Activated CD8-positive, alpha-beta memory T cell treated with anti-CD3 and anti-CD28 coated beads, Interleukin-2, amount 10 ng/mL, durations not matched to agents 7 days and 5 days (primary cell): ENCODE measurements at regions of chr11 and their contacts with region 1.

Region 1: GRCh38 chr11:130894322-130895025 is 21.8 kb downstream of the SNX19 start:
- DNase-seq: peak; percentile 77
- ATAC-seq: peak; percentile 91
- H3K4me3 Mint-ChIP-seq: no peak overlapping the region
- H3K27ac Mint-ChIP-seq: no peak overlapping the region
- H3K4me1 Mint-ChIP-seq: peaks cover 5% of the 10 kb centered on the region
- H3K27me3 Mint-ChIP-seq: no peaks in the 10 kb centered on the region

Region 2: DNA sequence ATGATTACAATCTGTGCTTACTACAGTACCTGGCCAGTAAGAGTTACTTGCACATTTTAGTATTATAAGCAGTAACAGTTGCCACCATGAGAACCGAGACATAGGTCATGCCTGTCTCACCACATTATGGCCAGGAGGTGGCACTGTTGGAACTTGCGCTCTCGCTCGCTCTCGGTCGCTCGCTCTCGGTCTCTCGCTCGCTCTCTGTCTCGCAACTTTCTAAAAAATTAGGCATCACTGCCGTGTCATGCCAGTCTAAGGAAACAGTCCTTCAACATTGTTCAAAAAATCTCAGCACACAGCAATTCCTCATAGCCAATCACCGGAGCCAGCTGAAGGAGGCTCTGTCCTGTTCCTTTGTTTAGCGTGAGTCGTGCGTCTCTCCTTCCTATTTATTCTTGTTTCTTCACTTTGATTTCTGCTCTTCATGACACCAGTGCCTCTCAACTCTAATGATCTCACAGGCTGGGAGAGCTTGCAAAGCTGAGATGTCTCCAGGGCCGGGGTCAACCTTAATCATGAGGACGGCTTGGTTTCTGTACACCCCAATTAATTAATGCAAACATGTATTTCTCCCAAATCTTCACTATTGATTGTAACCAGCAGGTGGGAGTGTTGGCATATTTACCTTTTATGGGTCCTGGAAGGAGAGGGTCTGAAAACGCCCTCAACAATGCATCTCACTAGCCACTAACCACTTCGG is 459.8 kb before region 1 on chr11:
- CTCF ChIA-PET with region 1: interaction called, 10 read pairs
- DNase-seq: peak; percentile 81
- ATAC-seq: peak; percentile 82
- H3K4me3 Mint-ChIP-seq: no peak overlapping the region
- H3K27ac Mint-ChIP-seq: no peak overlapping the region
- H3K4me1 Mint-ChIP-seq: peaks cover 31% of the 10 kb centered on the region
- H3K27me3 Mint-ChIP-seq: peaks cover 34% of the 10 kb centered on the region

Region 3: GRCh38 chr11:130872981-130873380 is 21.5 kb before region 1 on chr11:
- CTCF ChIA-PET with region 1: interaction called, 12 read pairs
- DNase-seq: no peak
- ATAC-seq: no peak
- H3K4me3 Mint-ChIP-seq: no peak overlapping the region
- H3K27ac Mint-ChIP-seq: no peak overlapping the region
- H3K4me1 Mint-ChIP-seq: no peaks in the 10 kb centered on the region
- H3K27me3 Mint-ChIP-seq: no peaks in the 10 kb centered on the region

Region 4: DNA sequence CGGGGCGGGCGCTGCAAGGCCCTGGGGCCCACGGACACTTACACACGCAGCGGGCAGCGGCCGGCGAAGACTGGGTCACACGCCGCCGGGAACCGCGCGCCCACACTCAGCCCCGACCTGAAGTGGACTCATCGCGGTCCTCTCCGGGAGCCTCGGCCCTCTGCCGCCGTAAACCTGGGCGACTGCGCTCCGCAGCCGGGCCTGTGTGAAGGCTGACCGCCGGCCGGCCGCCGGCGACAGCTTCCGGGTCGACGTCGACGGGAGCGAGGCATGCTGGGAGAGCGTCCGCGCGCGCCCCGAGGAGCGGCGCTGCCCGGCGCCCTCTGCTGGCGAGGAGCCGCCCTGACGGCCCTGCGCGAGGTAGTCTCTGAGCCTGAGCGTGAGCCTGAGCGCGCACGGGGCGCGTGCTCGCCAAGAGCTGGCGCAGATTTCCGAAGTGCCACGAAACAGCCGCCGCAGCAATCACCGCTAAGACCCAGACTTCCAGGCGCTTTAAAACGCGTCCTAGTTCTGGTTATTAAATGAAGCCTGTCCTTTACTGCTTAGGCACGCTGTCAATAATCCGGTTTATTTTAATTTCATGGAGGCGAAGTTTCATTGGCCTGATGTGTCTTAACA is 21.9 kb after region 1 on chr11 and contains the start of gene SNX19:
- CTCF ChIA-PET with region 1: interaction called, 50 read pairs
- DNase-seq: peak; percentile 92
- ATAC-seq: peak; percentile 100
- H3K4me3 Mint-ChIP-seq: peak within 1 kb of the TSS; percentile 77
- H3K27ac Mint-ChIP-seq: peak within 1 kb of the TSS; percentile 80
- H3K4me1 Mint-ChIP-seq: peaks cover 34% of the 10 kb centered on the region
- H3K27me3 Mint-ChIP-seq: peaks cover 6% of the 10 kb centered on the region
- total RNA-seq, gene SNX19: 41.5 to 43.4 TPM

Region 5: DNA sequence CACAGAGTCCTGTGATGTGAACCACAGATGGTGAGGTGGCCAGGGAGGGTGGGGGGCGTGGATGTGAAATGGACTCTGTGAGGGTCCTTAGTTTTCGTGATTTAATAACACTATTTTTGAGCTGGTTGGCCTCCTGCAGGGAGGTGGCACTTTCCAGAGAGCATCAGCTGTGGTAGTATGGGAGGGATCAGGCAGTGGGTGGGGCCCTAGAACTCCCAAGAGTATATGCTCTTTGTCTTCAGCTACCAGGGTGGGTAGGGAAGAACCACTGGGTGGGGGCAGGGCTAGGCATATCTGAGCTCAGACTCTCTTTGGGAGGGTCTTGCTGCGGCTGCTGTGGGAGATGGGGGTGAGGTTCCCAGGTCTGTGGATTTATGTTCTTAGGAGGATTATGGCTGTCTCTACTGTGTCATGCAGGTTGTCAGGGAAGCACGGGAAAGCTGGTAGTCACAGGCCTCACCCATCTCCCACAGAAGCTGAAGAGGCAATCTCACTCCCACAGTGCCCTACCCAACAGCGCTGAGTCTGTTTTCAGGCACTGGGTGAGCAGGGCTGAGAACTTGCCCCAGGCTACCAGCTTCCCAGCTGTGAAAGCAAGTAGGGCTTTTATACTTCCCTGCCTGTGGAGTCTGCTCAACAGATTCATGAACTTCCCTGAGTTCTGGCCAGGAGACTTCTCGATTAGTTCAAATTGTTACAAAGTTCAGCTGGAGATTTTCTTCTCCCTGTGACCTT is 69.8 kb after region 1 on chr11:
- CTCF ChIA-PET with region 1: no interaction called
- DNase-seq: no peak
- ATAC-seq: no peak
- H3K4me3 Mint-ChIP-seq: no peak overlapping the region
- H3K27ac Mint-ChIP-seq: no peak overlapping the region
- H3K4me1 Mint-ChIP-seq: no peaks in the 10 kb centered on the region
- H3K27me3 Mint-ChIP-seq: peaks cover 6% of the 10 kb centered on the region

Region 6: GRCh38 chr11:131038597-131038996 is 144.1 kb after region 1 on chr11:
- CTCF ChIA-PET with region 1: no interaction called
- DNase-seq: no peak
- ATAC-seq: no peak
- H3K4me3 Mint-ChIP-seq: no peak overlapping the region
- H3K27ac Mint-ChIP-seq: no peak overlapping the region
- H3K4me1 Mint-ChIP-seq: no peaks in the 10 kb centered on the region
- H3K27me3 Mint-ChIP-seq: no peaks in the 10 kb centered on the region

Region 7: DNA sequence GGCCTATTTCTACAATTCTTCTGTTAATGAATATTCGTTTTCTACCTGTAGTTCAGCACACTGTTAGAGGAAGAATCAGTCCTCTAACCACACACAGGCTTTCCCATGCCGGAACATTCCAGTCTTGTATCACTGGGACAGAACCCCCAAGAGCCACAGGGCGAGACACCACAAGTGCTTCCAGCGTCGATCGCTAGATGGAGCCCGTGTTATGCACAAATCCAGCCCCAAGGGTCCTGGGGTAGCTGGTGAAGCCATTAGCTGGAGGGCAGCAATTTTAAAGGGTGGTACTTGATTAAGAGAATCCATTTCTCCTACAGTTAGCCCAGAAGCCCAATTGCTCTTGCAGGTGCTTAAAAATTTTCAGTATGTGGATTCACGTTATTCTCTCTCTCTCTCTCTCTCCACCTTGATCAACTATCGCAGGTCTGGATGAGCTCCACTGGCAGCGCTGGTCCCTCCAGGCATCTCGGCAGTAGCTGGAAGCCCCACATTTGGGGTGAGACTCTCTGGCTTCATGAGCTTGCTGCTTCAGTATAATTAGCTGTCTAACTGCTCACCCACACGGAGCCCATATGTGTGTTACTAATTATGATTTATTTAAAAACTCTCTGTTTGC is 170.0 kb after region 1 on chr11:
- CTCF ChIA-PET with region 1: no interaction called
- DNase-seq: no peak
- ATAC-seq: no peak
- H3K4me3 Mint-ChIP-seq: no peak overlapping the region
- H3K27ac Mint-ChIP-seq: no peak overlapping the region
- H3K4me1 Mint-ChIP-seq: no peaks in the 10 kb centered on the region
- H3K27me3 Mint-ChIP-seq: no peaks in the 10 kb centered on the region